ENCODE measurements at regions of chr19 and their contacts with region 1.

Region 1: DNA sequence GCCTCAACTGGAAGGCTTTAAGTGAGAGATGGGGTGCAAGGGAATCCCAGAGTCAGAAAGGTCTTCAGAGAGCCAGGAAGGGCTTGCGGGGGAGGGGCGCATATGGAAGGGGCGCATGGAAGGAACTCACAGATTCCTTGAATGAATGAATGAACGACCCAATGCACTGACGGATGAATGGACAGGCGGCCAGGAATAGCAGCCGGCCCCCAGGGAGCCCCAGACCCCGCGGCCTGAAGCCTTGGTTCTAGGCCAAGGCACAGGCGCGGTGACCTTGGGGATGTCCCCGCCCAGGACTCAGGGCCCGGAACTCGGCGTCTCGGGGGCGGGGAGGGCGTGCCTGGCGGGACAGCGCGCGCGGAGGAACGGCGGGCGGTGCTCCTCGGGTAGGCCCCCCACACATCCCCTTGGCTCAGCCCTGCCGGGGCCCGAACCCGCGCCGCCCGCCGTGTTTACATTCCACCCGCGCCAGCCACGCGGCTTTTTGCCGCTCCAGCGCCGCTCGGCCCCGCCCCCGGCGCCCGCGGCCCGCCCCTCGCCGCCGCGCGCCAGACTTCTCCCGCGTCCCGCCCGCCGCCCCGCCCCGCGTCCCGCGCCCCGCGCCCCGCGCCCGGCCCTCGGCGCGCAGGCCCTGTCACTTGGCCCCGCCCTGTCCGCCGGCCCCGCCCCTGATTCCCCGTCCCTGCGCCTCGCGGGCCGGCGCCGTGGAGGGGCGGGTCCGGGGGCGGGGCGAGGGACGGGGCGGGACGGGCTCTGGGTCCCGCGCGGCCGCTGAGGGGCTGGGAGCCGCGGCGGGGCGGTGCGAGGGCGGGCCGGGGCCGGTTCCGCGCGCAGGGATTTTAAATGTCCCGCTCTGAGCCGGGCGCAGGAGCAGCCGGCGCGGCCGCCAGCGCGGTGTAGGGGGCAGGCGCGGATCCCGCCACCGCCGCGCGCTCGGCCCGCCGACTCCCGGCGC is at the start of gene CCNE1:
- DNase-seq: no peak
- ATAC-seq: peak; percentile 86
- H3K4me3 ChIP-seq: peak within 1 kb of the TSS; percentile 99
- H3K27ac ChIP-seq: peak within 1 kb of the TSS; percentile 75
- H3K4me1 ChIP-seq: peaks cover 16% of the 10 kb centered on the region
- H3K27me3 ChIP-seq: no peaks in the 10 kb centered on the region
- CTCF ChIP-seq: no peak
- EP300 ChIP-seq: no peak
- POLR2A ChIP-seq: peak; percentile 81
- RAD21 ChIP-seq: no peak
- polyA plus RNA-seq, gene CCNE1: 9.3 to 17.0 TPM

Region 2: DNA sequence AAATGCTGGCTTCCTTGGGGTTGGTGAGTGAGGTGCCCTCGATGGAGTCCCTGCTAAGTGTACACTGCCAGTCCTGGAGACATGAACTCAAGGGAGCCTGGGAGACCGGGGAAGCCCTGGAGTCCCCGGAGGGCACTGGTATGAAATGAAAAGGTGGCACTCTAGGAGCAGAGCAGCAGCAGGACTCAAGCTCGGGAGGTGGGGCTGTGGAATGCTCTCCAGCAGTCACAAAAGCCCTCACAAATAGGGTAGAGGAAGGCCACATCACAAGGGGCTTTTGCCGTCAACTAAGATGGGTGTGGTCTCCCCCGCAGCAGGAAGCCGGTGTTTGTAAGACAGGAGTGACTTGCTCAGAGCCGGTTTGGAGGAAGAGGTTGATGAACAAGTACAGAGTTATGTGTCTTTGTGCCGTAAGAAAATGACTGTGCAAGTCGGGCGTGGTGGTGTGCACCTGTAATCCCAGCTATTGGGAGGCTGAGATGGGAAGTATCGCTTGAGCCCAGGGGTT is 19.7 kb after region 1 on chr19:
- CTCF ChIA-PET with region 1: interaction called, 4 read pairs
- POLR2A ChIA-PET with region 1: interaction called, 5 read pairs
- RAD21 ChIA-PET with region 1: interaction called, 3 read pairs
- SMC1A ChIA-PET with region 1: interaction called, 11 read pairs
- in situ Hi-C with region 1: no loop called
- intact Hi-C with region 1: loop called (anchors 2 kb)
- DNase-seq: no peak
- ATAC-seq: peak; percentile 67
- H3K4me3 ChIP-seq: peak overlapping the region; percentile 17; the same call in 1 of the 2 replicates
- H3K27ac ChIP-seq: no peak overlapping the region
- H3K4me1 ChIP-seq: peaks cover 24% of the 10 kb centered on the region
- H3K27me3 ChIP-seq: no peaks in the 10 kb centered on the region
- CTCF ChIP-seq: no peak
- EP300 ChIP-seq: no peak
- POLR2A ChIP-seq: no peak
- RAD21 ChIP-seq: no peak

Region 3: GRCh38 chr19:29837448-29837981 is 26.1 kb after region 1 on chr19:
- CTCF ChIA-PET with region 1: interaction called, 4 read pairs
- POLR2A ChIA-PET with region 1: interaction called, 5 read pairs
- RAD21 ChIA-PET with region 1: interaction called, 3 read pairs
- SMC1A ChIA-PET with region 1: interaction called, 11 read pairs
- in situ Hi-C with region 1: no loop called
- intact Hi-C with region 1: loop called (anchors 2 kb)
- DNase-seq: peak; percentile 84
- ATAC-seq: peak; percentile 84
- H3K4me3 ChIP-seq: peak overlapping the region; percentile 58; the same call in 1 of the 2 replicates
- H3K27ac ChIP-seq: peak overlapping the region; percentile 74
- H3K4me1 ChIP-seq: peaks cover 46% of the 10 kb centered on the region
- H3K27me3 ChIP-seq: no peaks in the 10 kb centered on the region
- CTCF ChIP-seq: no peak
- EP300 ChIP-seq: 0 out of 4 replicates have a peak, but pooled peaks of 1 of the 2 experiments have one; percentile 34
- POLR2A ChIP-seq: no peak
- RAD21 ChIP-seq: 0 out of 2 replicates have a peak, but pooled peaks have one; percentile 5

Region 4: GRCh38 chr19:30064348-30064699 is 252.9 kb after region 1 on chr19:
- CTCF ChIA-PET with region 1: no interaction called
- POLR2A ChIA-PET with region 1: no interaction called
- RAD21 ChIA-PET with region 1: no interaction called
- SMC1A ChIA-PET with region 1: no interaction called
- in situ Hi-C with region 1: no loop called
- intact Hi-C with region 1: no loop called
- DNase-seq: no peak
- ATAC-seq: no peak
- H3K4me3 ChIP-seq: no peak overlapping the region
- H3K27ac ChIP-seq: no peak overlapping the region
- H3K4me1 ChIP-seq: no peaks in the 10 kb centered on the region
- H3K27me3 ChIP-seq: no peaks in the 10 kb centered on the region; a peak in 2 of 4 replicates
- CTCF ChIP-seq: no peak
- EP300 ChIP-seq: no peak
- POLR2A ChIP-seq: no peak
- RAD21 ChIP-seq: no peak